MCF 10A (cell line): ENCODE measurements at regions of chr10 and their contacts with region 1.

Region 1: GRCh38 chr10:43138021-43138756 is at the start of gene CSGALNACT2:
- DNase-seq: peak; percentile 85
- H3K4me3 Mint-ChIP-seq: peak within 1 kb of the TSS; percentile 91
- H3K27ac Mint-ChIP-seq: peak within 1 kb of the TSS; percentile 92
- H3K4me1 Mint-ChIP-seq: peaks cover 22% of the 10 kb centered on the region
- H3K27me3 Mint-ChIP-seq: no peaks in the 10 kb centered on the region
- CTCF ChIP-seq: no peak
- total RNA-seq, gene CSGALNACT2: 30.0 and 32.8 TPM in 2 replicates

Region 2: GRCh38 chr10:42638055-42638820 is 500.0 kb before region 1 on chr10 and contains the start of gene ZNF33B:
- CTCF ChIA-PET with region 1: no interaction called
- POLR2A ChIA-PET with region 1: interaction called, 11 read pairs
- intact Hi-C with region 1: no loop called
- DNase-seq: peak; percentile 96
- H3K4me3 Mint-ChIP-seq: peak within 1 kb of the TSS; percentile 87
- H3K27ac Mint-ChIP-seq: peak within 1 kb of the TSS; percentile 97
- H3K4me1 Mint-ChIP-seq: peaks cover 23% of the 10 kb centered on the region
- H3K27me3 Mint-ChIP-seq: no peaks in the 10 kb centered on the region
- CTCF ChIP-seq: no peak
- total RNA-seq, gene ZNF33B: 14.6 and 18.7 TPM in 2 replicates

Region 3: DNA sequence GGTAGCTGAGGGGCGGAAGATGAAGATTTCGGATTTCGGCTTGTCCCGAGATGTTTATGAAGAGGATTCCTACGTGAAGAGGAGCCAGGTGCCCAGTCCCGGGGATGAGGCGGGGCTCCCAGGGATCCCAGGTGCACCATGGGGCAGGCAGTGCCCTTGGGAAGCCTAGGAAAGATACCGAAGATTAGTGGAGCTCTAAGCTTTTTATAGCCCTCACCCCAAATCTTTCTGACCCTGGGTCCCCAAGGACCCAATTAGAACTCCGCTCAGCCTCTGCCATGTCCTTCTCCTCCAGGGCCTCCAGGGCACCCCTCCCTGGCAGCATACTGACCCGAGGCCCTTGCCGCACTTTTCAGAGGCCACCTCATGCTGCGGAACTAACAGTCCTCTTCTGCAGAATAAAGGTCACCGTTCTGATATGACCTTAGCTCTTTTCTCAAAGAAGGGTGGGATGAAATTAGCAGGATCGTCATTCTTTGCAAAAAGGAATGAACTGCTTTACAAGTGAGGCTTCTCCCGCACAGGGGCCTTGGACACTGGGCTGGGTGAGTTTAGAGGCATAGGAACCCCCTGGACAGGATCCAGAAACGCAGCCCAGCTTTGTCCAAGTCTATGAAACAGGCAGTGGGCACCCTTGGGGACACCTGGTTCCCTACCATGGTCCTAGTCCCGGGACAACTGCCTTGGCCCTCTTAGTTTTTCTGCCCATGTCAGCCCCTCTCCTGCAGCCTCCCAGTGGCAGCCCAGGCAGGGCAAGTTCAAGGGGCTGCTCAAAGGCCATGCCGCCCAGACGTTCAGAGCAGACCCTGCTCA is 17.9 kb before region 1 on chr10:
- CTCF ChIA-PET with region 1: no interaction called
- POLR2A ChIA-PET with region 1: no interaction called
- intact Hi-C with region 1: no loop called
- DNase-seq: no peak
- H3K4me3 Mint-ChIP-seq: no peak overlapping the region
- H3K27ac Mint-ChIP-seq: no peak overlapping the region
- H3K4me1 Mint-ChIP-seq: no peaks in the 10 kb centered on the region
- H3K27me3 Mint-ChIP-seq: no peaks in the 10 kb centered on the region
- CTCF ChIP-seq: no peak

Region 4: GRCh38 chr10:43151371-43151770 is 13.2 kb after region 1 on chr10:
- CTCF ChIA-PET with region 1: interaction called, 3 read pairs
- POLR2A ChIA-PET with region 1: interaction called, 14 read pairs
- intact Hi-C with region 1: no loop called
- DNase-seq: no peak
- H3K4me3 Mint-ChIP-seq: no peak overlapping the region
- H3K27ac Mint-ChIP-seq: peak overlapping the region; percentile 31
- H3K4me1 Mint-ChIP-seq: peaks cover 14% of the 10 kb centered on the region
- H3K27me3 Mint-ChIP-seq: no peaks in the 10 kb centered on the region
- CTCF ChIP-seq: no peak

Region 5: DNA sequence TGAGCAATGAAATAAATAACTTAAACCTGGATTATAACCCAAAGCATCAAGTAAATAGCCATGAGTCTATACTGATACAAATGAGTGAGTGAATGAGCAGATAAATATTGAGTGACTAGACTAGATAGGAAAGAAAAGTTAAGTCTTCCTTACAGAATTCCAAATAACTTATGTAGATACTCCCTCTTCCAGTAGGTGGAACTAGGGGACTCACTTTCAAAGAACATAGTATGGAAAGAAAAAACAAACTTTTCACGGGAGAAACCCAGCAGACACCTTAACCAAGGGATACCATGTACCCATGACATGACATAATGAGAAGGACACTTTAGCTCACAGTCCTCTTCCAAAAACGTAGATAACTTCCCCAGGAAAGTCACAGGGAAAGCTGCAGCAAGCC is 32.3 kb after region 1 on chr10:
- CTCF ChIA-PET with region 1: no interaction called
- POLR2A ChIA-PET with region 1: interaction called, 19 read pairs
- intact Hi-C with region 1: no loop called
- DNase-seq: no peak
- H3K4me3 Mint-ChIP-seq: no peak overlapping the region
- H3K27ac Mint-ChIP-seq: peak overlapping the region; percentile 59
- H3K4me1 Mint-ChIP-seq: peaks cover 11% of the 10 kb centered on the region
- H3K27me3 Mint-ChIP-seq: no peaks in the 10 kb centered on the region
- CTCF ChIP-seq: no peak

Region 6: DNA sequence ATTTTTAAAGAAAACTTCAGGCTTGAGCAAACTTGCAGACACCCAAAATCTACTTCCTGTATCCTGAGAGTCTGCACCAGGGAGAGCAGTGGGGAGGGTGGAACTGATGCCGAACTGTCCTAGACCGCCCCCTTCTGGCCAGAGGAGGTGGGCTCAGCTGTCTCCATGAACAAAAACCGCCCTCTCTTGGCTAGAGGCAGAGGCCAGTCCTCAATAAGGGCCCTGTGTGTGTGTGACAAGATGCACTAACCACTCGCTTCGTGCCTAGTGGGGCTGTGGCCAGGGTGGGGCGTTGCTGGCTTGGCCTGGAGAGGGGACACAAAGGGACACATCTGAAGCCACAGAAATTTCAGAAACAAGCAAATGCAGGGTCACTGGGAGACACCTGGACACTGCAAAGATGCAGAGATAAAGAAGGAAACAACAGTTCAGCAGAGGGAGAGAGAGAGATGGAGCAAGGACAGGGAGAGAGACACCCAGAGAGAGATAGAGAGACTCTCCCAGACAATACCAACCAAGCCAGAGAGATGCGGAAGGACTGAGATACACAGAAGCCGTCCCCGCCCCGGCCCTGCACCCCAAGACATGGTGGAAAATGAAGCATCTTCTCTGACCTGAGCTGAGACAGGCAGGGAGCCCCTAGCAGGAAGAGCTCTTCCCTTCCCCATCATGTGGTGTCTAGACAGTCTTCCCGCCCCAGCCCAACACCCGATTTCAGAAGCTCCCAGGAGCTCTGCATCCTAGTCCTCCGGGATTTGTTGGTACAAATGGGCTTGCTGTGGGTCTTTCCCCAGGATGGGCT is 210.5 kb after region 1 on chr10:
- CTCF ChIA-PET with region 1: interaction called, 3 read pairs
- POLR2A ChIA-PET with region 1: interaction called, 3 read pairs
- intact Hi-C with region 1: loop called (anchors 2 kb)
- DNase-seq: peak; percentile 82
- H3K4me3 Mint-ChIP-seq: no peak overlapping the region
- H3K27ac Mint-ChIP-seq: no peak overlapping the region
- H3K4me1 Mint-ChIP-seq: peaks cover 9% of the 10 kb centered on the region
- H3K27me3 Mint-ChIP-seq: no peaks in the 10 kb centered on the region
- CTCF ChIP-seq: peak; percentile 92

Region 7: DNA sequence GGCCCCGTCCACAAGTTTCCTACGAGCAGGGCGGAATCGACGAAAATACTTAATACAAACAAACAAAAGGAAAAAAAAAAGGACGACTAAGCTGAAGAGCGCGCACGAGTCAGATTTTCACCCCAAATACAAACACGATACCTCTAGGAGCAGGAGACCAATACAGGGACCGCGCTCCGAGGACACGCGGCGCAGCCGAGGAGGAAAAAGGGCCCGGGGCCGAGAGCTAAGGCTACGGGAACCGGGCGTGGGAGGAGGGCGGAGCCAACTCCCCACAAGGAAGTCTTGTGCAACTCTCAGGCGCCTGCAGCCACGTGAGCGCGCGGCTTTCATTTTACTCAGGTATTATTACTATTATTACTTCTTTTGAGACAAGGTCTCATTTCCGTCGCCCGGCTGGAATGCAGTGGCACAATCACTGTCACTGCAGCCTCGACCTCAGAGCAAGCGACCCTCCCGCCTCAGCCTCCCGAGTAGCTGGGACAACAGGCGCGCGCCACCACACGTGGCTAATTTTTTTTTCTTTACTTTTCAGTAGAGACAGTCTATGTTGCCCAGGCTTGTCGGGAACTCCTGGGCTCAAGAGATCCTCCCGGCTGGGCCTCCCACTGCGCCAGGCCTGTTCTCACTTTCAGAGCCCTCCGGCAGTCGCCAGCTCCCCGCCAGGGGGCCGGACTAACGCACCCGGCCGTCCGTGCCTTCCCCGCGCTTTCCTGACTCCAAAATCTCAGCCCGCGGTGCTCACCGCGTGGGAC is 269.6 kb after region 1 on chr10:
- CTCF ChIA-PET with region 1: no interaction called
- POLR2A ChIA-PET with region 1: interaction called, 11 read pairs
- intact Hi-C with region 1: no loop called
- DNase-seq: peak; percentile 94
- H3K4me3 Mint-ChIP-seq: peak overlapping the region; percentile 89
- H3K27ac Mint-ChIP-seq: peak overlapping the region; percentile 99
- H3K4me1 Mint-ChIP-seq: peaks cover 24% of the 10 kb centered on the region
- H3K27me3 Mint-ChIP-seq: no peaks in the 10 kb centered on the region
- CTCF ChIP-seq: no peak